Activated T-helper 1 cell treated with anti-CD3 and anti-CD28 coated beads, Interleukin-12 subunit alpha, Interleukin-12 subunit beta, Interleukin-2, Interleukin-4 antibody, amounts not matched to agents 30 ng/mL and 10 ng/mL and 1 ng/mL, durations not matched to agents 14 hours and 24 hours and 36 hours (primary cell): ENCODE measurements at regions of chr21 and their contacts with region 1.

Region 1: DNA sequence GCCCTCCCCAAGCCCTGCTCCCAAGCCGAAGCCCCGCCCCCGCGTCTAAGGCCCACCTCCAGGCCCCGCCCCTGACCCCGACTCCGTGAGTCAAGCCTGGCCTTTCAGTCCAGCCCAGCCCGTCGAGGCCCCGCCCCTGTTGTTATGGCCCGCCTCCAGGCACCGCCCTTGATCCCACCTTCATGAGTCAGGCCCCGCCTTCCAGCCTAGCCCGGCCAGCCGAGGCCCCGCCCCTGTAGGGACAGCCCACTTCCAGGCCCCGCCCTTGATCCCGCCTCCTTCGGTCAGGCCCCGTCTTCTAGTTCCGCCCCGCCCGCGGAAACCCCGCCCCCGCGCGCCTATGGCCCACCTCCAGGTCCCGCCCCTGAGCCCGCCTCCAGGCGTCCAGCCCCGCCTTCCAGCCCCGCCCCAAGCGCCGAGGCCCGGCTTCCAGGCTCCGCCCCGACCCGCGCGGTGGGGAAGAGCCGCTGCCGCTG is 247 bp upstream of the DOP1B start:
- DNase-seq: peak; percentile 99
- H3K4me3 Mint-ChIP-seq: peak overlapping the region; percentile 86
- H3K27ac Mint-ChIP-seq: peak overlapping the region; percentile 9
- H3K4me1 Mint-ChIP-seq: peaks cover 10% of the 10 kb centered on the region
- H3K27me3 Mint-ChIP-seq: peaks cover 9% of the 10 kb centered on the region

Region 2: GRCh38 chr21:36060159-36060921 is 96.0 kb before region 1 on chr21 and contains the start of gene SETD4:
- intact Hi-C with region 1: loop called (anchors 1 kb)
- DNase-seq: peak; percentile 91
- H3K4me3 Mint-ChIP-seq: peak within 1 kb of the TSS; percentile 93
- H3K27ac Mint-ChIP-seq: peak within 1 kb of the TSS; percentile 98
- H3K4me1 Mint-ChIP-seq: peaks cover 23% of the 10 kb centered on the region
- H3K27me3 Mint-ChIP-seq: peaks cover 3% of the 10 kb centered on the region
- total RNA-seq, gene SETD4: 21.9 and 22.0 TPM in 2 replicates

Region 3: DNA sequence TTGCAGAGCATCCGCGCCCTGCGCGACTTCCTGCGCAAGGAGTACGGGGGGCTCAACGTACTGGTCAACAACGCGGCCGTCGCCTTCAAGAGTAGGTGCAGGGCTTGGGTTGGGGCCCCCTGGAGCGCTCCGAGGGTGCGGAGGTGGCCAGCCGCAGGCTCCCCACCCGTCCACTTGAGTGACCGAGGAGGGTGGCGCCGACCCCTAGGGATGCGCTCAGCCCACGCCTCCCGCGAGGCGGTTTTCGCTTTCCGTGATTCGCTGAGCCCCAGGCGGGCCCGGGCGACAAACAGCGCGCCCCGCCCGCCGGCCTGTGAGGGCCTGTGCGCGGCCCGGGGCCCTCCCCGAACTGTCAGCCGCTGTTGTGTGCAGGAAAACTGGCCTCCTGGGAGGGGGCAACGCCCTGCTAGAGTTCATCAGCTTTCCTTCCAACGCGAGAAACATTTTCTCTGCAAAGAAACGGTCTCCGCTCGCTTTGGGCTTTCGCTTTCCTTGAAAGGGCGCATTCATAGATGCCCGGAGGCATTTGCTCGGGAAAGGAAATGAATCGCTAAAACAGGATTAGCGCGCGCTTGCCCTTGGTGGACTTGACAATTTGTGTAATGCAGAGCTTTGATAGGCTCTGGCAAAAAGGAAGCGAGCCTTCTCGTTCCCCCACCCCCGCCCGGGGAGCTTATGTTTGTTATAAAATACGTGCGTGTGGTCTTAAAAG is 20.8 kb before region 1 on chr21:
- intact Hi-C with region 1: loop called (anchors 1 kb)
- DNase-seq: peak; percentile 68
- H3K4me3 Mint-ChIP-seq: peak overlapping the region; percentile 94
- H3K27ac Mint-ChIP-seq: peak overlapping the region; percentile 94
- H3K4me1 Mint-ChIP-seq: peaks cover 22% of the 10 kb centered on the region
- H3K27me3 Mint-ChIP-seq: peaks cover 5% of the 10 kb centered on the region

Region 4: DNA sequence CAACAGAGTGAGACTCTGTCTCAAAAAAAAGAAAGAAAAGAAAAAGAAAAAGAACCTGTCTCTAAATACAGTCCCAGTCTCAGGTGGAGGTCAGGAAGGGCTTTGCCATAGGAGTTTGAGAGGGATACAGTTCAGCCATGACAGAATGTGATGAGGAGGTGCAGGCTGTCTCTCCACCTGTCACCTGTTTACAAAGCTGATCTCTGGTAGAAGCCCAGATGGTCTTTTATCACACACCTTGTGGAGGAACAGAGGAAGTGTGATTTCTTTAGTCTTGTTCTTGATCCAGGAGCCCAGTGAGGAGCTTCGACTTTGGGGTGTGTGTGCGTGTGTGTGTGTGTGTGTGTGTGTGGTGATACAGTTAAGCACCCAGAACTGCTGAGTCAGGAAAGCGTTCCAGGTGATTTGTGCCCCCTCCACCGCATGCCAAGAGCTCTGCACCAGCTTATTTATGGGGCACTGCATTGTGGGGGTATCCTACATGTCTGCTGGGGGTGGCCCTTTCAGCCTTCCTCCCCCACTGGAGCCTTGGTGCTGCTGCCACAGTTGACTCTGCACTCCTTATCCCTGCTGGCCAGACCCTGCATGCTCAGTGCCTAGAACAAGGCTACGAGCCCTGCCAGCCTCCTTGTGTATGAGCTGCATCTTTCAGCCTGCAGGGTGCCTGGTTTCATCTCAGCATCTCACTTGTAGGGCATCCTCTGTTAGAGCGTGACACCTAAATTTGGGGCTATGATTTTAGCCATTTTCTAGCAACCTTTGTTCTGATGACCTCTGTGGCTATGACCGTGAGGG is 19.6 kb after region 1 on chr21:
- intact Hi-C with region 1: loop called (anchors 1 kb)
- DNase-seq: no peak
- H3K4me3 Mint-ChIP-seq: no peak overlapping the region
- H3K27ac Mint-ChIP-seq: no peak overlapping the region
- H3K4me1 Mint-ChIP-seq: peaks cover 10% of the 10 kb centered on the region
- H3K27me3 Mint-ChIP-seq: no peaks in the 10 kb centered on the region

Region 5: DNA sequence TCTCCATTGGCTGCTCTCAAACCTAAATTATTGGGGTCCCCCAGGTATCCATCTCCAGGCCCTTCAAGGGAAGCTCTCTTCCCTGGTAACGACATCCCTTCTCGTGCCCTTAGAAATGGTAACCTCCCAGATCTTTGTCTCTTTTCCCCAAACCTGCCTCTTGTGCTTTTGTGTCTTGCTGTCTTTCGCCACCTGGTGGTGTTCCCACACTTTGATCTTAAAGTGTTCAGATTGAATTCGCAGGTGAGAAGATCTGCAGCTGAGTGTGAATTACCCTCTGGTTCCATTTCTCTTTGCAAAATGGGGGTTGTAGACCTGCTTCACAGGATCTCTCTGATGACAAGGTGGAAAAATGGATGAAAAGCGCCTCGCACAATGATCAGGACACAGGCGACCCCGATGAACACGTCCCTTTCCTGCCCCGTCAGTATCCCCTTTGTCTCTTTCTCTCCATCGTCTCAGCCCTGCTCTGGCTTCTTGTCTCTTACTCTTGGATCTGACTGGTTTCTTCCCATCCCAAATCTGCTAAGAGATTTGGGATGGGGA is 53.3 kb after region 1 on chr21:
- intact Hi-C with region 1: loop called (anchors 1 kb)
- DNase-seq: peak; percentile 38
- H3K4me3 Mint-ChIP-seq: no peak overlapping the region
- H3K27ac Mint-ChIP-seq: no peak overlapping the region
- H3K4me1 Mint-ChIP-seq: peaks cover 19% of the 10 kb centered on the region
- H3K27me3 Mint-ChIP-seq: peaks cover 2% of the 10 kb centered on the region

Region 6: GRCh38 chr21:36330904-36331303 is 174.5 kb after region 1 on chr21:
- intact Hi-C with region 1: loop called (anchors 1 kb)
- DNase-seq: no peak
- H3K4me3 Mint-ChIP-seq: no peak overlapping the region
- H3K27ac Mint-ChIP-seq: no peak overlapping the region
- H3K4me1 Mint-ChIP-seq: peaks cover 13% of the 10 kb centered on the region
- H3K27me3 Mint-ChIP-seq: no peaks in the 10 kb centered on the region

Region 7: GRCh38 chr21:37267269-37268184 is 1111.2 kb after region 1 on chr21 and contains the start of gene VPS26C:
- intact Hi-C with region 1: loop called (anchors 1 kb)
- DNase-seq: peak; percentile 99
- H3K4me3 Mint-ChIP-seq: peak within 1 kb of the TSS; percentile 97
- H3K27ac Mint-ChIP-seq: peak within 1 kb of the TSS; percentile 98
- H3K4me1 Mint-ChIP-seq: peaks cover 51% of the 10 kb centered on the region
- H3K27me3 Mint-ChIP-seq: peaks cover 8% of the 10 kb centered on the region
- total RNA-seq, gene VPS26C: 53.8 and 58.9 TPM in 2 replicates